ENCODE measurements at regions of chr14 and their contacts with region 1.

Region 1: GRCh38 chr14:63632932-63633514 is 8.6 kb downstream of the WDR89 start:
- DNase-seq: peak in 2 of 9 experiments; percentile 52 to 69
- ATAC-seq: peak; percentile 94
- H3K4me3 ChIP-seq: no peak overlapping the region
- H3K4me3 Mint-ChIP-seq: no peak overlapping the region
- H3K27ac ChIP-seq: no peak overlapping the region
- H3K27ac Mint-ChIP-seq: no peak overlapping the region
- H3K4me1 ChIP-seq: peaks cover 12% of the 10 kb centered on the region
- H3K4me1 Mint-ChIP-seq: peaks cover 56% of the 10 kb centered on the region
- H3K27me3 ChIP-seq: no peaks in the 10 kb centered on the region
- H3K27me3 Mint-ChIP-seq: no peaks in the 10 kb centered on the region
- CTCF ChIP-seq: peak; percentile 95

Region 2: GRCh38 chr14:63361790-63362189 is 271.2 kb before region 1 on chr14:
- CTCF ChIA-PET with region 1: no interaction called
- POLR2A ChIA-PET with region 1: no interaction called
- intact Hi-C with region 1: no loop called
- DNase-seq: no peak
- ATAC-seq: no peak
- H3K4me3 ChIP-seq: no peak overlapping the region
- H3K4me3 Mint-ChIP-seq: no peak overlapping the region
- H3K27ac ChIP-seq: no peak overlapping the region
- H3K27ac Mint-ChIP-seq: no peak overlapping the region
- H3K4me1 ChIP-seq: no peaks in the 10 kb centered on the region
- H3K4me1 Mint-ChIP-seq: no peaks in the 10 kb centered on the region
- H3K27me3 ChIP-seq: no peaks in the 10 kb centered on the region
- H3K27me3 Mint-ChIP-seq: peaks cover 11% of the 10 kb centered on the region
- CTCF ChIP-seq: no peak

Region 3: GRCh38 chr14:63388763-63389431 is 244.1 kb before region 1 on chr14:
- CTCF ChIA-PET with region 1: no interaction called
- POLR2A ChIA-PET with region 1: no interaction called
- intact Hi-C with region 1: loop called in 1 of 2 experiments (anchors 2 kb)
- DNase-seq: peak; percentile 15 to 63 (median 44)
- ATAC-seq: peak; percentile 75
- H3K4me3 ChIP-seq: no peak overlapping the region
- H3K4me3 Mint-ChIP-seq: no peak overlapping the region
- H3K27ac ChIP-seq: no peak overlapping the region
- H3K27ac Mint-ChIP-seq: no peak overlapping the region
- H3K4me1 ChIP-seq: no peaks in the 10 kb centered on the region
- H3K4me1 Mint-ChIP-seq: peaks cover 5% of the 10 kb centered on the region
- H3K27me3 ChIP-seq: no peaks in the 10 kb centered on the region
- H3K27me3 Mint-ChIP-seq: no peaks in the 10 kb centered on the region
- CTCF ChIP-seq: peak; percentile 57

Region 4: GRCh38 chr14:63650256-63650952 is 17.4 kb after region 1 on chr14:
- CTCF ChIA-PET with region 1: interaction called, 24 read pairs
- POLR2A ChIA-PET with region 1: interaction called, 5 read pairs
- intact Hi-C with region 1: no loop called
- DNase-seq: peak; percentile 19 to 87 (median 65)
- ATAC-seq: peak; percentile 96
- H3K4me3 ChIP-seq: peak overlapping the region; percentile 10 to 26
- H3K4me3 Mint-ChIP-seq: peak overlapping the region; percentile 69
- H3K27ac ChIP-seq: peak overlapping the region; percentile 78 to 93
- H3K27ac Mint-ChIP-seq: peak overlapping the region; percentile 100
- H3K4me1 ChIP-seq: peaks cover 40% of the 10 kb centered on the region
- H3K4me1 Mint-ChIP-seq: peaks cover 52% of the 10 kb centered on the region
- H3K27me3 ChIP-seq: no peaks in the 10 kb centered on the region
- H3K27me3 Mint-ChIP-seq: no peaks in the 10 kb centered on the region
- CTCF ChIP-seq: no peak

Region 5: DNA sequence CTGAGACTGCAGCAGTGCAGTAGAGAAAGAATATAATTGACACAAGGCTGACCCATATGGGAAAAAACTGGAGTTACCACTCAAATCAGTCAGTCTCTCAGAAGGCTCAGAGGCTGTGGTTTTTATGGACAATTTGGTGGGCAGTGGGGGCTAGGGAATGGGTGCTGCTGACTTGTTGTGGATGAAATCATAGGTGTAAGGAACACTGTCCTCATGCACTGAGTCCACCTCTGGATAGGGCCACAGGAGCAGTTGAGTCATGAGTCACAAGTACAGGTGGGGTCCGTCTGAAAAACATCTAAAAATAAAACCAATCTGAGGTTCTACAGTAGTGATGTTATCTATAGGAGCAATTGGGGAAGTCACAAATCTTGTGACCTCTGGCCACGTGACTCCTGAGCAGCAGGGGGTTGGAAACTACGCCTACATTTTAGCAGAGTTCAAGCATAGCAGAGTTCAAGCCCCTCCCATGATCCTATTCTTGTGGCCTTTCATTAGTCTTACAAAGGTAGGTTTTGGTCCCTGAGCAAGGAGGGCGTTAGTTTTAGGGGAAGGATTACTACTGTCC is 112.9 kb after region 1 on chr14:
- CTCF ChIA-PET with region 1: interaction called, 8 read pairs
- POLR2A ChIA-PET with region 1: no interaction called
- intact Hi-C with region 1: loop called (anchors 1 to 2 kb)
- DNase-seq: peak in 4 of 9 experiments; percentile 3 to 40 (median 26)
- ATAC-seq: peak; percentile 36
- H3K4me3 ChIP-seq: no peak overlapping the region
- H3K4me3 Mint-ChIP-seq: no peak overlapping the region
- H3K27ac ChIP-seq: no peak overlapping the region
- H3K27ac Mint-ChIP-seq: peak overlapping the region; percentile 5
- H3K4me1 ChIP-seq: peaks cover 5% of the 10 kb centered on the region
- H3K4me1 Mint-ChIP-seq: peaks cover 13% of the 10 kb centered on the region
- H3K27me3 ChIP-seq: no peaks in the 10 kb centered on the region
- H3K27me3 Mint-ChIP-seq: no peaks in the 10 kb centered on the region
- CTCF ChIP-seq: no peak

Region 6: GRCh38 chr14:64303471-64303917 is 670.5 kb after region 1 on chr14:
- CTCF ChIA-PET with region 1: no interaction called
- POLR2A ChIA-PET with region 1: no interaction called
- intact Hi-C with region 1: loop called in 1 of 2 experiments (anchors 5 kb)
- DNase-seq: peak in 2 of 9 experiments; percentile 53 to 66
- ATAC-seq: peak; percentile 68
- H3K4me3 ChIP-seq: no peak overlapping the region
- H3K4me3 Mint-ChIP-seq: no peak overlapping the region
- H3K27ac ChIP-seq: no peak overlapping the region
- H3K27ac Mint-ChIP-seq: no peak overlapping the region
- H3K4me1 ChIP-seq: no peaks in the 10 kb centered on the region
- H3K4me1 Mint-ChIP-seq: no peaks in the 10 kb centered on the region
- H3K27me3 ChIP-seq: no peaks in the 10 kb centered on the region
- H3K27me3 Mint-ChIP-seq: peaks cover 4% of the 10 kb centered on the region
- CTCF ChIP-seq: peak; percentile 92

Measured in CD8-positive, alpha-beta T cell (primary cell).